Vagina (tissue), 2 donors: ENCODE measurements at regions of chr12 and their contacts with region 1.

Region 1: GRCh38 chr12:113152835-113153814 is 3.6 kb downstream of the CFAP73 start:
- DNase-seq: no peak
- H3K4me3 ChIP-seq: peak overlapping the region; percentile 40 to 41
- H3K27ac ChIP-seq: no peak overlapping the region
- H3K4me1 ChIP-seq: peaks cover 36% of the 10 kb centered on the region
- H3K27me3 ChIP-seq: no peaks in the 10 kb centered on the region
- CTCF ChIP-seq: peak in 1 of 3 experiments; percentile 51
- POLR2A ChIP-seq: no peak

Region 2: DNA sequence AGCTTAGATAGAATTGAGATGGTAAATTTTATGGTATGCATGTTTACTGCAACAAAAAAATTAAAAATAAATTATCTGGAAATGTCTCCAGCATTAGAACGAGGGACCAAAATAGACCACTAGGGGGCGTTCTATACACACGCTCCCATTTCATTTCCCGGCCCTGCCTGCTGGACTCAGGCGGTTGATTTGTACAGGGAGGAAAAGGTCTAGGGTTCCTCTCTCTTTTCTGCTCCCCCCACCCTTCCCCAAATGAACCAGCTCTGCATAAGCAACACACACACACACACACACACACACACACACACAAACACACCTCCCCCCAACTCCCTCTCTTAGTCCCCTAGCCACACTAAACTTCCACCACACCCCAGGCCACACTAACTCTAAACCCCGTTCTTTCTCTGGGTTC is 104.4 kb before region 1 on chr12:
- intact Hi-C with region 1: no loop called
- DNase-seq: no peak
- H3K4me3 ChIP-seq: no peak overlapping the region
- H3K27ac ChIP-seq: no peak overlapping the region
- H3K4me1 ChIP-seq: no peaks in the 10 kb centered on the region
- H3K27me3 ChIP-seq: no peaks in the 10 kb centered on the region
- CTCF ChIP-seq: peak; percentile 60 to 74 (median 67)
- POLR2A ChIP-seq: no peak

Region 3: DNA sequence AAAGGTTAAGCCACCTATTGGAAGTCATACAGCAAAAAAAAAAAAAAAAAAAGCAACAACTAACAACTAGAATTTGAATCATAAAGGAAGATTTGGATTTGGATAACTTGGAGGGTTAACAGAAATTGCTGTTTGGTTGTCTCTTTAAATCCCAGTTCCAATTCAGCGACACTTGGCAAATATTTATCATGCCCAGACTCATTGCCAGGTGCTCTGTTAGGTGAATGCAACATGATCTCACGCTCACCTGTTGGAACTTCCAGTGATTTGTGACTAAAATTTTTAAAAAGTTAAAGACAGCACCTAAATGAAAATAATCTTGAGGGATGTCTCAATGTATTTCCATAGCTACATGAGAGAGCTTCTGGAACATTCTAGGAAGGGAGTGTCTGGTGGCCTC is 1427.2 kb after region 1 on chr12:
- intact Hi-C with region 1: loop called (anchors 10 kb)
- DNase-seq: no peak
- H3K4me3 ChIP-seq: no peak overlapping the region
- H3K27ac ChIP-seq: no peak overlapping the region
- H3K4me1 ChIP-seq: no peaks in the 10 kb centered on the region
- H3K27me3 ChIP-seq: no peaks in the 10 kb centered on the region
- CTCF ChIP-seq: no peak
- POLR2A ChIP-seq: no peak